Posterior vena cava (tissue), 2 donors: ENCODE measurements at regions of chr3 and their contacts with region 1.

Region 1: DNA sequence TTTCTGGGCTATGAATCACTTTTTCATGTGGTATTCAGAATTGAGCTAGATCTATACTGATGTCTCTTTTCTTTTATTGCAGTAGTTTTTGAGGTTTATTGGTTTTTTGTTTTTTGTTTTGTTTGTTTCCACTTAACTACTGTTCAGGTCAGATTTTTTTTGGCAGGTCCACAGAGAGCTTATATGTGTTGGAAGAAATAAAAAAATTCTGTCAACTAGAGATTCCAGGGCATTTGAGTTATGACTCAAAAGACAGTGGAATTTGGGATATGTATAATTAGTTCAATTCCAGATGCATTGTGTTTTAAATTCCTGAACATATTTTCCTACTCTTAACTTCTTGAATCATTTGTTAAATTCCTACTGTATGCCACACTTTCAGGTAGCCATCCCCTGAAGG is 727.2 kb downstream of the SI start:
- DNase-seq: no peak

Region 2: GRCh38 chr3:163577271-163577670 is 773.9 kb before region 1 on chr3:
- intact Hi-C with region 1: loop called in 1 of 2 experiments (anchors 5 kb)
- DNase-seq: no peak